ENCODE measurements at regions of chr18 and their contacts with region 1.

Region 1: DNA sequence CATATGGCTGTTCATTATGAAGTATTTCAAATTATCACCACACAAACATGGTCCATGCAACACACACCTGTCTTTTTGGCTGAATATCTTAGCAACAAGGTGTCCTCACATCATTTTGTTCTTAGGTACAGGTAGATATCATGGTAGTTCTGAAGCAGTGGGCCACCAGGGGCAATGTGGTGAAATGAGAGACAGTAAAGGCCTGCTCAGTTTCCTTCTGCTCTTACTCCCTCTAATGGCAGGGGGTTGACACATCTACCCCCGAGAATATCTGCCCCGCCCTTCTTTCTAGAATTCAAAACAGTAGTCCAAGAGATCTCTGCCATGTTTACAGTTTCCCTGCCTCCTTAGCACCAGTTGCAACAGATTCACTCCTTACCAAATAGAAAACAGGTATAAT is 147.0 kb upstream of the KLHL14 start:
- DNase-seq: peak; percentile 82
- H3K4me3 ChIP-seq: no peak overlapping the region
- H3K27ac ChIP-seq: no peak overlapping the region
- H3K4me1 ChIP-seq: peaks cover 21% of the 10 kb centered on the region
- CTCF ChIP-seq: peak; percentile 81

Region 2: GRCh38 chr18:32714571-32715148 is 205.1 kb before region 1 on chr18:
- CTCF ChIA-PET with region 1: interaction called, 4 read pairs
- POLR2A ChIA-PET with region 1: interaction called, 3 read pairs
- intact Hi-C with region 1: loop called (anchors 1 kb)
- DNase-seq: peak; percentile 75
- H3K4me3 ChIP-seq: no peak overlapping the region
- H3K27ac ChIP-seq: no peak overlapping the region
- H3K4me1 ChIP-seq: peaks cover 9% of the 10 kb centered on the region
- CTCF ChIP-seq: peak; percentile 85

Region 3: GRCh38 chr18:32771169-32771751 is 148.5 kb before region 1 on chr18:
- CTCF ChIA-PET with region 1: no interaction called
- POLR2A ChIA-PET with region 1: no interaction called
- intact Hi-C with region 1: loop called (anchors 5 kb)
- DNase-seq: peak; percentile 48
- H3K4me3 ChIP-seq: peak overlapping the region; percentile 70
- H3K27ac ChIP-seq: no peak overlapping the region
- H3K4me1 ChIP-seq: peaks cover 42% of the 10 kb centered on the region
- CTCF ChIP-seq: no peak

Region 4: DNA sequence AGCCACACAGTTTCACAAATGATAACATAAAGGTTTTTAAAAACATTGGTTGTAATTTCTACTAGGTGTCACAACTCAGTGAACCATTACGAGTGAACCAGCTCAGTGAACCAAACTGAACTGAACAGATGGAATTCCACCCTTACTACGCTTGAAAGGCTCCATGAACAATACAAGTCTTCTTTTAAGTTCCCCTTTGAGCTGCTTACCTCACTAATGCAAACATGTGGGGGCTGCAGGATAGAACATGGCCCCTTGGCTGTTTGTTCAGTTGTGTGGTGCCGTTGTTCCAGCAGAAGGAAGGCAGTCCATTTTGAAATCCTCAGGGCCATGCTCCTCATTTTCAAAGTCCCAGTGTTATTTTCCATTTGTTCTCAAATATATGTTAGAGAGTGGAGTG is 116.2 kb before region 1 on chr18:
- CTCF ChIA-PET with region 1: no interaction called
- POLR2A ChIA-PET with region 1: no interaction called
- intact Hi-C with region 1: loop called (anchors 10 kb)
- DNase-seq: peak; percentile 90
- H3K4me3 ChIP-seq: peak overlapping the region; percentile 58
- H3K27ac ChIP-seq: peak overlapping the region; percentile 97
- H3K4me1 ChIP-seq: peaks cover 61% of the 10 kb centered on the region
- CTCF ChIP-seq: no peak